ENCODE measurements at regions of chr3 and their contacts with region 1.

Region 1: DNA sequence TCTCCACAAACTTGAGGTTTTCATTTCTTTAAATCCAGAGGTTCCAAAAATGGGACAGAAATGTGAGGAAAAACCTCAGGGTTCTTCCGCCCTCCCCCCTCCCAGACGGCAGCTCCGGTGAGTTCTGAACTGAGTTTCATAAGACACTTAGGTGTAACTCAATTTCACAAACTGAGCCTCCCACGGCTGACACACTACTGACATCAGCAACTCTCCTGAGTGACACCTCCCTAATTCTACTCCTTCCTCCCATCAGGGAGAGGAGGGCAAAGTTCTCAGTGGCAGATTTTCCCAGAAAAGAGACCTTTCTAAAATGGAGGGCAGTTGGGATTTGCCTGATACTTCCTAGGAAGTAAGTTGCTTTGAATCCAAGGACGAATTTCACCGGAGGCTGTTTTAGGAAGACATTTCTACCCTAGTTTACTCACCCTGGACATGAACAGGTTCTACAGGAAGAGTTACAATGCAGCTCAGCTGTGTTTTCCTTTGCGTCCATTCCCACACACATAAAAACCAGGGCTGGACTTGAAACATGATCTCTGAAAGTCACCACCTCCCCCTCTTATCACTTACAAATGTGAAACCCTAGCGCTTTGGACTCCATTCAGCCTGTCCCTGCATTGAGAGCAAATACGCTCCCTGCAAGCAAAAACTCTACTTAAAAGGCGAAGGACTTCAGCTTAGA is 78.1 kb upstream of the LMOD3 start:
- DNase-seq: peak; percentile 73 to 96
- H3K4me3 ChIP-seq: peak overlapping the region; percentile 83
- H3K27ac ChIP-seq: peak overlapping the region; percentile 97
- H3K4me1 ChIP-seq: peaks cover 39% of the 10 kb centered on the region
- H3K27me3 ChIP-seq: no peaks in the 10 kb centered on the region
- CTCF ChIP-seq: no peak

Region 2: DNA sequence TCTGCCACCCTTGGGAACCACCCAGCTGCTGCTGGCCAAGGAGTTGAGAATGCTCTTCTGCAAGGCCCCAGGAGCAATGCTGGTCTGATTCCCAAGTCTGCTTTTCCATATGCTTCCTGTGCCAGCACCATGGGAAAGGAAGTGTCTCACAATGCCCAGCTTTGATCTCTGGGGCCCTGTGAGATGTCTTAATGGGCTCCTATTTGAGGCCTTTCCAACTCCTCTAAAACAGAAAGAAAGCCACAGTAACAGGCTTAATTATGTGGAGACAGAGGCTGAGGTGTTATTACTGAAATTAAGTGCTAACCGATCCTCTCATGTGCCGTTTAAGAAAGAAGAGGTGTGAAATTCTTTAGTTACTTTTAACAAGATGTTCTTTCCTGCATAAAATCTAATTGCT is 191.5 kb before region 1 on chr3:
- CTCF ChIA-PET with region 1: no interaction called
- POLR2A ChIA-PET with region 1: no interaction called
- intact Hi-C with region 1: no loop called
- DNase-seq: no peak
- H3K4me3 ChIP-seq: no peak overlapping the region
- H3K27ac ChIP-seq: no peak overlapping the region
- H3K4me1 ChIP-seq: no peaks in the 10 kb centered on the region; the same call in 1 of the 2 replicates
- H3K27me3 ChIP-seq: no peaks in the 10 kb centered on the region
- CTCF ChIP-seq: no peak

Region 3: GRCh38 chr3:69120879-69121464 is 79.6 kb before region 1 on chr3:
- CTCF ChIA-PET with region 1: no interaction called
- POLR2A ChIA-PET with region 1: no interaction called
- intact Hi-C with region 1: loop called (anchors 5 kb)
- DNase-seq: peak; percentile 64 to 77
- H3K4me3 ChIP-seq: no peak overlapping the region
- H3K27ac ChIP-seq: no peak overlapping the region
- H3K4me1 ChIP-seq: peaks cover 18% of the 10 kb centered on the region
- H3K27me3 ChIP-seq: no peaks in the 10 kb centered on the region
- CTCF ChIP-seq: peak; percentile 83

Region 4: GRCh38 chr3:69212411-69213139 is 12.0 kb after region 1 on chr3:
- CTCF ChIA-PET with region 1: interaction called, 3 read pairs
- POLR2A ChIA-PET with region 1: interaction called, 11 read pairs
- intact Hi-C with region 1: loop called (anchors 1 kb)
- DNase-seq: peak in 1 of 2 experiments; percentile 95
- H3K4me3 ChIP-seq: no peak overlapping the region
- H3K27ac ChIP-seq: peak overlapping the region; percentile 97
- H3K4me1 ChIP-seq: peaks cover 45% of the 10 kb centered on the region
- H3K27me3 ChIP-seq: no peaks in the 10 kb centered on the region
- CTCF ChIP-seq: no peak

Region 5: GRCh38 chr3:69240651-69241568 is 40.4 kb after region 1 on chr3:
- CTCF ChIA-PET with region 1: interaction called, 8 read pairs
- POLR2A ChIA-PET with region 1: interaction called, 10 read pairs
- intact Hi-C with region 1: loop called (anchors 1 kb)
- DNase-seq: no peak
- H3K4me3 ChIP-seq: no peak overlapping the region
- H3K27ac ChIP-seq: no peak overlapping the region
- H3K4me1 ChIP-seq: peaks cover 30% of the 10 kb centered on the region
- H3K27me3 ChIP-seq: no peaks in the 10 kb centered on the region
- CTCF ChIP-seq: no peak

Region 6: GRCh38 chr3:69306239-69307185 is 106.0 kb after region 1 on chr3:
- CTCF ChIA-PET with region 1: interaction called, 3 read pairs
- POLR2A ChIA-PET with region 1: interaction called, 21 read pairs
- intact Hi-C with region 1: no loop called
- DNase-seq: peak; percentile 58 to 70
- H3K4me3 ChIP-seq: no peak overlapping the region
- H3K27ac ChIP-seq: peak overlapping the region; percentile 29; the same call in 1 of the 2 replicates
- H3K4me1 ChIP-seq: peaks cover 12% of the 10 kb centered on the region; the same call in 1 of the 2 replicates
- H3K27me3 ChIP-seq: no peaks in the 10 kb centered on the region
- CTCF ChIP-seq: peak; percentile 87

Region 7: DNA sequence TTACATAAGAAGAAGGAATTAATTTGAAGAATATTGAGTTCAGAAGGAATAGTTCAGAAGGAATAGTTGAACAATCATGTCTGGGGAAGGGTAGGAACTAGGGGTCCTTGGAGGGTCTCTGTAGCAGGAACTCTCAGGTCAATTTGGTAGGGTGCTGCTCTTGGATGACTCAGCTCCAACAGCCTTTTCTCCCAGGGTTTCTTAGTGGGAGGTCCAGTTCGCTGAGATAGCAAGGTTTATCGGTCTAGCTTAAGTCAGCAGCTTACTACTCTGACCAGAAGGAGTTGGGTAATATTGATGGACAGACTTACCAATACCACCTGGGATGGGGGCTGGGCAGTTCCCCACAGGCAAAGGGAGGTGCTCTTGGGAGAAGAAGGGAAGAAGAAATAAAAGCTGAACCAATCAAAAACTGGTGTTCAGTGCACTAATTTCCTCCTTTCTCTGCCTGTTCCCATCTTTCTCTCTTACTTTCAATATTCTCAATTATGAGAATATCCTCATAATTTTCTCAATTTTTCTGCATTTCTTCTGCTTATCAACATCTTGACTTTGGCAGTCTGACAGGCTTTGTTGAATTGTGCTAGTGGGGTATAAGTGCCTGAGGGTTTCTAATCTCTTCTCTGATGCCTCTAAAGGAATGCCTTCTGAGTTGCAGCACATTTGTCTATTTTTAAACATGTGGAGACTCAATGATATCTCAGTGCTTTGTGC is 524.4 kb after region 1 on chr3:
- CTCF ChIA-PET with region 1: no interaction called
- POLR2A ChIA-PET with region 1: no interaction called
- intact Hi-C with region 1: no loop called
- DNase-seq: no peak
- H3K4me3 ChIP-seq: no peak overlapping the region
- H3K27ac ChIP-seq: no peak overlapping the region
- H3K4me1 ChIP-seq: no peaks in the 10 kb centered on the region
- H3K27me3 ChIP-seq: no peaks in the 10 kb centered on the region
- CTCF ChIP-seq: no peak